ENCODE measurements at regions of chr6 and their contacts with region 1.

Region 1: DNA sequence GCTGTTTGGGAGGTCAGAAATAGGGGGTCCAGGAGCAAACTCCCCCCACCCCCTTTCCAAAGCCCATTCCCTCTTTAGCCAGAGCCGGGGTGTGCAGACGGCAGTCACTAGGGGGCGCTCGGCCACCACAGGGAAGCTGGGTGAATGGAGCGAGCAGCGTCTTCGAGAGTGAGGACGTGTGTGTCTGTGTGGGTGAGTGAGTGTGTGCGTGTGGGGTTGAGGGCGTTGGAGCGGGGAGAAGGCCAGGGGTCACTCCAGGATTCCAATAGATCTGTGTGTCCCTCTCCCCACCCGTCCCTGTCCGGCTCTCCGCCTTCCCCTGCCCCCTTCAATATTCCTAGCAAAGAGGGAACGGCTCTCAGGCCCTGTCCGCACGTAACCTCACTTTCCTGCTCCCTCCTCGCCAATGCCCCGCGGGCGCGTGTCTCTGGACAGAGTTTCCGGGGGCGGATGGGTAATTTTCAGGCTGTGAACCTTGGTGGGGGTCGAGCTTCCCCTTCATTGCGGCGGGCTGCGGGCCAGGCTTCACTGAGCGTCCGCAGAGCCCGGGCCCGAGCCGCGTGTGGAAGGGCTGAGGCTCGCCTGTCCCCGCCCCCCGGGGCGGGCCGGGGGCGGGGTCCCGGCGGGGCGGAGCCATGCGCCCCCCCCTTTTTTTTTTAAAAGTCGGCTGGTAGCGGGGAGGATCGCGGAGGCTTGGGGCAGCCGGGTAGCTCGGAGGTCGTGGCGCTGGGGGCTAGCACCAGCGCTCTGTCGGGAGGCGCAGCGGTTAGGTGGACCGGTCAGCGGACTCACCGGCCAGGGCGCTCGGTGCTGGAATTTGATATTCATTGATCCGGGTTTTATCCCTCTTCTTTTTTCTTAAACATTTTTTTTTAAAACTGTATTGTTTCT is at the start of gene VEGFA:
- DNase-seq: peak; percentile 87 to 92 (median 91)
- H3K4me3 ChIP-seq: peak within 1 kb of the TSS; percentile 51 to 86 (median 76)
- H3K27ac ChIP-seq: peak within 1 kb of the TSS in 1 of 2 experiments; percentile 84
- H3K4me1 ChIP-seq: peaks cover 0 to 52% (median 42%) of the 10 kb centered on the region in 4 experiments
- H3K27me3 ChIP-seq: peaks cover 0 to 30% (median 0%) of the 10 kb centered on the region in 5 experiments

Region 2: DNA sequence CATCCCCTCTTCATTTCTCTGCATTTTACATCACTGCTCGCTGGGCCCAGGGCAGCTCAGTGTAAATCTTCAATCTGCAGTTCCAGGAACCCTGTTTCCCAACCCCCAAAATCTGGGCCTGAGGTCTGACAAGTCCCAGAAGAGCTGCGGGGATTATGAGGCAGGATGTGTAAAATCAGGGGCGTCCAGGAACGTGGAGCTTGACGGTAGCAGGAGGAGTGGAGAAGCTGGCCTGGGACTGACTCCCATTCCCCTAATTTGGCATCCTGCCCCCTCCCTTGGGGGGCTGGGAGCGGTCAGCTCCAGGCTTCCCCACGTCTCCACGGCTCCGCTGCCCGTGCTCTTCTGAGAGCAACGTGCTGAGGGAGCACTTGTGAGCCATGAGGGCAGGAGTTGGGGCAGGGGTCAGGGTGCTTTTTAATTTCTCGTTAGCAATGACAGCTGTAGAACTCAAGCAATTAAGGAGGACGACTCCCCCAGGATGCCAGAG is 23.1 kb before region 1 on chr6:
- CTCF ChIA-PET with region 1: interaction called, 16 read pairs
- POLR2A ChIA-PET with region 1: no interaction called
- DNase-seq: no peak
- H3K4me3 ChIP-seq: no peak overlapping the region
- H3K27ac ChIP-seq: no peak overlapping the region
- H3K4me1 ChIP-seq: peaks cover 0 to 8% (median 0%) of the 10 kb centered on the region in 4 experiments
- H3K27me3 ChIP-seq: no peaks in the 10 kb centered on the region

Region 3: DNA sequence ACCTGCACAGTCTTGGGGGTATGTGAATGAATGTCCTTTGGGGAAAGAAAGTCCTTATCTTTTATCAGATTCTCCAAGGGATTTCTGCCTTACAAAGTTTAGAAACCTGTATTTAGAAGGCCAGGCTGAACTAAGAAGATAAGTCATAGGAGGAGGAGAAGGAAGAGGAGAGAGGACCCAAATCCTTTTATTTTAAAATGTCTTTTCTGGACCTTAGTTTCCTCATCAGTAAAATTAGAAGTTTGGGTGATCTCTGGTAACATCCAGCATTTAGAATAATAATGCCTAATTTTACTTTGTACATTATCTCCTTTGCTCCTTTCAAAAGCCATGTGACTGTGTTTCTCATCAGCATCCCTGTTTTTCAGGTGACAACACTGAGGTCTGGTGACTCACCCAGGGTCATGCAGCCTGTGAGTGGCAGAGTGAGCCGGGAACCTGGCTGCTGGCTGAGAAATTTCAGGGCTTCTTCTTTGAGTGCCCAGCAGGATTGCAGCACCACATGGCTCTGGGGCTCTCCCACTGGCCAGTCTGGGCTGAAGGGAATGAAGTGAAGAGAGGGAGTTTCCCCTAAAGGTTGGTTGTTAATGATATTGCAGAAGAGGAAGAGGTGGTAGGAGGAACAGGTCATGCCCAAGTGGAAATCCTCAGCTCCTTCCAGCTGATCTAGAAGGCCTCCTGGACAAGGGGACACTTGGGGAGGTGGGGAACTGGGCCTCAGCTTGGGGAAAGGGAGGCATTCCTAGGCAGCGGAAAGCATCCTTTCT is 34.2 kb after region 1 on chr6:
- CTCF ChIA-PET with region 1: interaction called, 68 read pairs
- POLR2A ChIA-PET with region 1: interaction called, 6 read pairs
- DNase-seq: peak in 2 of 3 donors; percentile 46
- H3K4me3 ChIP-seq: no peak overlapping the region
- H3K27ac ChIP-seq: peak overlapping the region in 1 of 2 experiments; percentile 18
- H3K4me1 ChIP-seq: peaks cover 14 to 79% (median 55%) of the 10 kb centered on the region in 4 experiments
- H3K27me3 ChIP-seq: no peaks in the 10 kb centered on the region

Region 4: GRCh38 chr6:43847741-43848605 is 78.2 kb after region 1 on chr6:
- CTCF ChIA-PET with region 1: interaction called, 10 read pairs
- POLR2A ChIA-PET with region 1: no interaction called
- DNase-seq: no peak
- H3K4me3 ChIP-seq: no peak overlapping the region
- H3K27ac ChIP-seq: no peak overlapping the region
- H3K4me1 ChIP-seq: peaks cover 0 to 10% (median 0%) of the 10 kb centered on the region in 4 experiments
- H3K27me3 ChIP-seq: no peaks in the 10 kb centered on the region

Region 5: DNA sequence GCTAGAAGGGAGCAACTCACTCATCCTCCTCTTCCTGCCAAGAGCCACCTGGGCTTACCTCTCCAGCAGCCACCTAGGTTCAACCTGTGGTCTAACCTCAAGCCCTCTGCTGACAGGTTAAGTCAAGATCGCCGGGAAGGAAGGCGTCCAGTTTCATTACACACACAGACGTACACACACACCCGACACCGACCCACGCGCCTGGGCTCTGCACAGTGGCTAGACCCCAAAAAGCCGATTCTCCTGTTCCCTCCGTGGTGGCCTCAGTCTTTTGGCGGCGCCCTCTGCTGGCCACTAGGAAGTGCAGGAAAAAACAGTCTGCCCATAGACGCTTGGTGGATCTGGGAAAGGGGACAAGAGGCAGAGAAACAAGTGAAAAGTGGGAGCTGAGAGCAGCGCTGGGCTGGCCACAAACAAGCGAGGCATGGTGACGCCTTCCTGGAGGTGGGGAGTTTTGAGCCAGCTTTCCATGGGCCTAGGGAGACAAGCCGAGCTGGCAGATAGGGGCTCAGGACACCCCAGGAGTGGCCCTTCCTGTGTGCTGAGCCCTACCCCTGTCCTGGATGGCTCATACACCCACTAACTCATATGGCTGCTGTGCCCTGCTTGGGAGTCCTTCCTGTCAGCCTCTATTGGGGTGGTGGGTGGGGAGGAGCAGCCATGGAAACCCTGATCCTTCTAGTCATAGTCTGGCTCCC is 304.8 kb after region 1 on chr6:
- CTCF ChIA-PET with region 1: interaction called, 46 read pairs
- POLR2A ChIA-PET with region 1: no interaction called
- DNase-seq: peak; percentile 74 to 85 (median 80)
- H3K4me3 ChIP-seq: peak overlapping the region in 1 of 7 experiments; percentile 61
- H3K27ac ChIP-seq: peak overlapping the region in 1 of 2 experiments; percentile 73
- H3K4me1 ChIP-seq: peaks cover 3 to 31% (median 25%) of the 10 kb centered on the region in 4 experiments
- H3K27me3 ChIP-seq: peaks cover 0 to 43% (median 17%) of the 10 kb centered on the region in 5 experiments